Endothelial cell of umbilical vein (primary cell): ENCODE measurements at regions of chr2 and their contacts with region 1.

Region 1: DNA sequence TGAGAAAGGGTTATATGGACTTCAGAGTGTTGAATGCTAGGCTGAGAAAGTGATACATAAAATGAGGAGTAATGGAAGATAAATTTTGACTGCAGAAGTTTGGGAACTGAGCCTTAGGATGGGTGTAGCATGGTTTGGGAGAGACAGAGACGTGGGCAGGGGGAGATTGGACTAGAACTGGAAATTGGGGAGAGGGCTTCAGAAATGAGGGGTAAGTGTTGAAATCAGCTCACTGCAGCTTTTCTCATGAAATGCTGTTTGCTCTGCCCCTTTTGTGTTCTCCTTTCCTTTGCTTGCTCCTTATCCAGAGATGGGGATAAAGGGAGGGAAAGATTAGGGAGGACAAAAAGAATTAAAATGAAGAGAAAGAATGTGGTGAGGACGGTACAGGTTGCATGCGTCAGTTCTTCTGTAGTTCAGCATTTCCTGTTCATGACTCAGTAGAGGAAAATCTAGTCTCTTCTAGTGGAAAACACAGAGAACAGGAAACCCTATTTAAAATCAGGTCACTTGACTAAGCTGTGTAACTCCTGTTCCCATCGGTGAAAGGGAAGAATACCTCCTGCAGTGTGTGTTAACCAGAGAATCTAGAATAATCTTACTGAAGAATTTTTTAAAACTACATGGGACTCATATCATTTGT is 105.6 kb downstream of the CRIM1 start:
- DNase-seq: peak; percentile 93
- H3K4me3 ChIP-seq: peak overlapping the region in 1 of 3 experiments; percentile 30
- H3K27ac ChIP-seq: peak overlapping the region; percentile 98
- H3K4me1 ChIP-seq: peaks cover 97% of the 10 kb centered on the region
- H3K27me3 ChIP-seq: no peaks in the 10 kb centered on the region
- CTCF ChIP-seq: no peak
- POLR2A ChIP-seq: peak; percentile 15

Region 2: GRCh38 chr2:36367895-36368353 is 93.2 kb before region 1 on chr2:
- CTCF ChIA-PET with region 1: interaction called, 41 read pairs
- POLR2A ChIA-PET with region 1: interaction called, 3 read pairs
- dilution Hi-C with region 1: no loop called
- intact Hi-C with region 1: loop called (anchors 2 kb)
- DNase-seq: peak; percentile 45
- H3K4me3 ChIP-seq: peak overlapping the region in 1 of 3 experiments; percentile 1
- H3K27ac ChIP-seq: peak overlapping the region; percentile 31
- H3K4me1 ChIP-seq: peaks cover 98% of the 10 kb centered on the region
- H3K27me3 ChIP-seq: no peaks in the 10 kb centered on the region
- CTCF ChIP-seq: no peak
- POLR2A ChIP-seq: no peak

Region 3: GRCh38 chr2:36389091-36389564 is 72.0 kb before region 1 on chr2:
- CTCF ChIA-PET with region 1: interaction called, 13 read pairs
- POLR2A ChIA-PET with region 1: interaction called, 8 read pairs
- dilution Hi-C with region 1: no loop called
- intact Hi-C with region 1: no loop called
- DNase-seq: peak; percentile 87
- H3K4me3 ChIP-seq: no peak overlapping the region
- H3K27ac ChIP-seq: peak overlapping the region; percentile 98
- H3K4me1 ChIP-seq: peaks cover 87% of the 10 kb centered on the region
- H3K27me3 ChIP-seq: no peaks in the 10 kb centered on the region
- CTCF ChIP-seq: no peak
- POLR2A ChIP-seq: no peak

Region 4: DNA sequence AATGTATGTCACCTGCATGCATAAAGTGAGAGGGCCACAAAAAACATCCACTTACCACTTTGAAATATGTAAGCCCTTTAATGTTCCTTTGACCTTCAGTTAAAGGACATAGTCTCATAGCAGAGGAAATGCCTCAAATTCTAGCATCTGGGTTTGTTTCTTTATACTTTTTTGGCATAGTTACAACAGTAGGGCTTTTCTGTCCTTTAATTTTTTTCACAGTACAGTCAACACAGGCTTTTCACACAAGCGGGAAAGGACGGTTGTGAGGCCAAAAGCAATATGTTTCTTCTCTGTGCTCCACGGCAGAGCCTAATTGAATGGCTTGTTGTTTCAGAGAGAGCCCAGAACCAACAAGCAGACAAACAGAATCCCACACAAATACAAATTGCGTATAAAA is 47.9 kb before region 1 on chr2:
- CTCF ChIA-PET with region 1: interaction called, 14 read pairs
- POLR2A ChIA-PET with region 1: interaction called, 4 read pairs
- dilution Hi-C with region 1: no loop called
- intact Hi-C with region 1: loop called (anchors 1 kb)
- DNase-seq: peak; percentile 88
- H3K4me3 ChIP-seq: peak overlapping the region in 1 of 3 experiments; percentile 8
- H3K27ac ChIP-seq: peak overlapping the region; percentile 92
- H3K4me1 ChIP-seq: peaks cover 88% of the 10 kb centered on the region
- H3K27me3 ChIP-seq: no peaks in the 10 kb centered on the region
- CTCF ChIP-seq: no peak
- POLR2A ChIP-seq: peak; percentile 78

Region 5: GRCh38 chr2:36450466-36451196 is 10.5 kb before region 1 on chr2:
- CTCF ChIA-PET with region 1: interaction called, 31 read pairs
- POLR2A ChIA-PET with region 1: no interaction called
- dilution Hi-C with region 1: no loop called
- intact Hi-C with region 1: no loop called
- DNase-seq: no peak
- H3K4me3 ChIP-seq: no peak overlapping the region
- H3K27ac ChIP-seq: peak overlapping the region; percentile 73
- H3K4me1 ChIP-seq: peaks cover 100% of the 10 kb centered on the region
- H3K27me3 ChIP-seq: no peaks in the 10 kb centered on the region
- CTCF ChIP-seq: no peak
- POLR2A ChIP-seq: no peak

Region 6: GRCh38 chr2:36486546-36487044 is 25.4 kb after region 1 on chr2:
- CTCF ChIA-PET with region 1: interaction called, 24 read pairs
- POLR2A ChIA-PET with region 1: interaction called, 14 read pairs
- dilution Hi-C with region 1: no loop called
- intact Hi-C with region 1: loop called (anchors 1 kb)
- DNase-seq: peak; percentile 90
- H3K4me3 ChIP-seq: no peak overlapping the region
- H3K27ac ChIP-seq: peak overlapping the region; percentile 93
- H3K4me1 ChIP-seq: peaks cover 93% of the 10 kb centered on the region
- H3K27me3 ChIP-seq: no peaks in the 10 kb centered on the region
- CTCF ChIP-seq: no peak
- POLR2A ChIP-seq: peak; percentile 43